ENCODE measurements at regions of chr2 and their contacts with region 1.

Region 1: DNA sequence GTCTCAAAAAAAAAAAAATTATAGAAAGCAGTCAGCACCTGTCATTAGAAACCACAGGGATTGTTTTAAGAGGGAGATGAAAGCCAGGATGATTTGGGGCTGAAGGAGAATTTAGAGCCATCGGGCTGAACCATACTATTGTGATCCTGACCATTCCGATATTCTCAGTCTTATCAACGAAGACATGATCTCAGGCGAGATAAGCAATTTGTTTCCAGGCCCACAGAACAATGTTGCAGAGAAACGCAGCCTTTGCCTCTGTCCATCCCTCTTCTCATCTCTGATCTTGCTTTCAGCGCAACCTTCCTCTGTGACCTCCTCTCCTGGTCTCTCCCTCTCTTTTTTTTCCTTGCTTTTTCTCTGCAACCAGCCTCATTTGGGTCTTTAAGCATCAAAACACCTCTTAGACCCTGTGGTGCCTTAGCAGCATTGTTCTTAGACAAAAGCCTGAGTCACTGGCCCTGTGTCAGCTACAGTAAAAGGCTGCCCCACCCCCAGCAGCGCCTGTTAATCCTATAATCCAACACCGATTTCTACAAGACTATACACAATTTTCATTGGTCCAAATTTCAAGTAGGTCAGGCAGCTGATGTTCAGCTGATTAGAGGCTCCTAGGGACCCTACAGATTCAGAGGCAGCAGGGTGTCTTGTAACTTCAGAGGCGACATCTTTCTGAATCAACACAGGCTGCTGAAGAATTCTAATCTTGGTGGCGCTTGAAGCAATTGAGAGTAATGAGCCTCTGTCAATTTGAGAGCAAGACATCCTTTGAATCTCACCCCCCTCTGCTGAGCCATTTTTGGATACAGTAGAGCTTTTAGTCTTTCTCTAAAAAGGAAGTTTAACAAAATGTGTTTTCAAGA is 206.0 kb downstream of the NCK2 start:
- DNase-seq: peak in 1 of 2 donors; percentile 22
- ATAC-seq: peak in 3 of 8 donors; percentile 38 to 71 (median 53)
- H3K4me3 ChIP-seq: no peak overlapping the region
- H3K27ac ChIP-seq: peak overlapping the region in 1 of 10 donors; percentile 0
- H3K4me1 ChIP-seq: peaks cover 0 to 30% (median 12%) of the 10 kb centered on the region in 9 donors
- H3K27me3 ChIP-seq: peaks cover 0 to 5% (median 0%) of the 10 kb centered on the region in 7 donors
- CTCF ChIP-seq: no peak

Region 2: DNA sequence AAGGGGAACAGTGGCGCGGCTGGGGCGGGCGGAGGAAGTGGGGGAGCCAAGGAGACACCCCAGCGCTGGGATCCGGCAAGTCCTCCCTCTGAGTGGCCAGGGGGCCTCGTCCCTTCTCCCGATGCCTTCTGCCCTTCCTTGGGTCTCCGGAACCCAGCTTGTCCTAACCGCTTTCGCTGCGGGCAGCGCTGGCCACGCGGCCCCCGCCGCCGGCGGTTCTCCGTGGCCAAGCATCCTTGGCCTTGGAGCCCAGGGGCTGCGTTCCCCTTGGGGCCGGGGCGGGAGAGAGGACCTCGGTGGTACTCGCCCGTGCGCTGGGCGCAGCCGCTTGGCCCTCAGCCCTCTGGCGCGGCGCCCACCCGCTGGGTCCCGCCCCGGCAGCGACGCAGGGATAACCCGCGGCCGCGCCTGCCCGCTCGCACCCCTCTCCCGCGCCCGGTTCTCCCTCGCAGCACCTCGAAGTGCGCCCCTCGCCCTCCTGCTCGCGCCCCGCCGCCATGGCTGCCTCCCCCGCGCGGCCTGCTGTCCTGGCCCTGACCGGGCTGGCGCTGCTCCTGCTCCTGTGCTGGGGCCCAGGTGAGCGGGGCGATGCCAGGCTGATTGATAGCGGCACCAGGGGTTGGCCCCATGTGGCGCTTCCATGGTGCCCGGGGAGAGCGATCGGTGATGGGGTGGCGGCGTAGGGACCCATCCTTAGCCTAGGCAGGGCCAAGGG is 114.7 kb after region 1 on chr2:
- intact Hi-C with region 1: loop called in 1 of 10 experiments (anchors 10 kb)
- DNase-seq: peak in 1 of 2 donors; percentile 64
- ATAC-seq: peak; percentile 52 to 77 (median 66)
- H3K4me3 ChIP-seq: peak overlapping the region; percentile 33 to 62 (median 54)
- H3K27ac ChIP-seq: peak overlapping the region in 6 of 10 donors; percentile 7 to 55 (median 21)
- H3K4me1 ChIP-seq: peaks cover 0 to 16% (median 10%) of the 10 kb centered on the region in 9 donors
- H3K27me3 ChIP-seq: peaks cover 0 to 29% (median 9%) of the 10 kb centered on the region in 7 donors
- CTCF ChIP-seq: no peak